Dendritic cell treated with granulocyte-macrophage colony-stimulating factor and Interleukin-4, amounts not matched to agents 40 ng/mL and 50 ng/mL, for 4 days (primary cell): ENCODE measurements at regions of chr1 and their contacts with region 1.

Region 1: DNA sequence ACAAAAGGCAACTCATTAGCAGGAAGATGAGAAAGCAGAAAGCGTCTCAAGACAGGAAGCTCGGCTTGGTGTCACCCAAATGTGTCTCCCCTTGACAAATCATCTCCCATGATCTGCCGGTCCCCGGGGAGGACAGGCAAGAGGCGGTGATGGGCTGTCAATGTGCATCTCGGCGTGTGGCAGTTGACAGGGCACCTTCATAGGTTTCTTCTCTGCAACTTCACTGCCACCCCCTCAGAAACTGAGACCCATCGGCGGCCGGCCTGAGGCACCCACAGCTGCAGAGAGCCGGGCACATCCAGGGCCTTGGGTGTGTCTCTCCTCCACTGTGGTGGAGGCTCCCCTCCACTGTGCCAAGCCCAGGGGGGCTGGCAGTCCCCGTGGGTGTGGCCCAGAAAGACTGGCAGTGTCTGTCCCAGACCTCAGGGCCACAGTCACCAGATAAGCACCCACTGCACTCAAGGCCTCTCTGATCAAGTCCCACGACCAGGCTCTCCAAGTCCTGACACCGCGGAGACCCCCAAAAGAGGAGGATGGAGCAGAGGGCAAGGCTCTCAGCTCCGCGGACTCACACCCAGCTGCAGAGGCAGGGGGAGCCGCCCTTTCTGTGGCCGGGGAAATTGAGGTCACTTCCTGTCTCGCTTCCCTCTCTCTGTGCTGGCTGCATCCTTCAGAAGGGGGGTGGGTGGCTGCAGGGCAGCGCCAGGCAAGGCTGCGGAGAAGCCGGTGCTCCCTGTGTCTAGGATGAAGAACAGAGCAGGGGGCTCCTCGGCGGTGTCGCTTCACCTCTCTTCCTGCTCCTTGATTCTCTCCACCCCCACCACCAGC is 39.6 kb upstream of the LBR start:
- H3K4me3 Mint-ChIP-seq: peak overlapping the region; percentile 79
- H3K27ac Mint-ChIP-seq: peak overlapping the region; percentile 98
- H3K4me1 Mint-ChIP-seq: peaks cover 52% of the 10 kb centered on the region
- H3K27me3 Mint-ChIP-seq: no peaks in the 10 kb centered on the region

Region 2: DNA sequence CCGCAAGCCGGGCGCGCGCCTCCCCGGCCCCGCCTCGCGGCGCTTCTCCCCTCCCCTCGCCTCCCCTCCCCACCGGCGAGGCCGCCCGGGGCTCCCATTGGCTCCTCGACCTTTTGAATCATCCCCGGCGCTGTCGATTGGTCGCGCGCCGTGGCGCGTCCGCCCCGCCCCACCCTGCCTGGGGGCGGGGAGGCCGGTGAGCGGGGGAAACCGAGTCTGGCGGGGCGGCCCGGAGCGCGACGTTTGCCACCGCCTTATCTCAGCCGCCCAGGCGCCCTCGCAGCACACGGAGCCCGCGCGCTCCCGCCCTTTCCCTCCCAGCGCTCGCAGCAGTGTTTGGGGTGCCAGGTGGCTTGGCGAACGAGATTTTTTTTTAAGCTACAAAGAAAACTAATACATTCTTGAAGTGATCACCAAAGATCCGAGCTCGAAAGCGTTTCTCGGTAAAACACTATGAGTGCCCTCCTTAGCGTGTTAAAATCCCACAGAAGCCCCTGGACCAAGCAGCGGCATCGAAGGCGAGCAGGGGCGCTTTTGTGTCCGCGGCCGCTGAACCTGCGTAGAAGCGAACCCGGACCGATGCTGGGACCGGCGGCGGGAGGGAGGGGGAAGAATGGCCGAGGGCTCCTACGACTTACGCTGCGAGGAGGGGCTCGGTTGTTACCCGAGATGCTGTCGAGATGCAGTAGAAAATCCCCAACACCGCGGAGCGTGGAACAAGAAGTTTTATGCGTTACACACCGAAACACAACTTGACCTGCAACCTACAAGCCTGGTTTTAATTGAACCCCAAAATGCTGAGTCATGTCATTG is 39.1 kb before region 1 on chr1:
- intact Hi-C with region 1: loop called (anchors 2 kb)
- H3K4me3 Mint-ChIP-seq: peak overlapping the region; percentile 84
- H3K27ac Mint-ChIP-seq: peak overlapping the region; percentile 78
- H3K4me1 Mint-ChIP-seq: peaks cover 34% of the 10 kb centered on the region
- H3K27me3 Mint-ChIP-seq: peaks cover under 1% of the 10 kb centered on the region

Region 3: DNA sequence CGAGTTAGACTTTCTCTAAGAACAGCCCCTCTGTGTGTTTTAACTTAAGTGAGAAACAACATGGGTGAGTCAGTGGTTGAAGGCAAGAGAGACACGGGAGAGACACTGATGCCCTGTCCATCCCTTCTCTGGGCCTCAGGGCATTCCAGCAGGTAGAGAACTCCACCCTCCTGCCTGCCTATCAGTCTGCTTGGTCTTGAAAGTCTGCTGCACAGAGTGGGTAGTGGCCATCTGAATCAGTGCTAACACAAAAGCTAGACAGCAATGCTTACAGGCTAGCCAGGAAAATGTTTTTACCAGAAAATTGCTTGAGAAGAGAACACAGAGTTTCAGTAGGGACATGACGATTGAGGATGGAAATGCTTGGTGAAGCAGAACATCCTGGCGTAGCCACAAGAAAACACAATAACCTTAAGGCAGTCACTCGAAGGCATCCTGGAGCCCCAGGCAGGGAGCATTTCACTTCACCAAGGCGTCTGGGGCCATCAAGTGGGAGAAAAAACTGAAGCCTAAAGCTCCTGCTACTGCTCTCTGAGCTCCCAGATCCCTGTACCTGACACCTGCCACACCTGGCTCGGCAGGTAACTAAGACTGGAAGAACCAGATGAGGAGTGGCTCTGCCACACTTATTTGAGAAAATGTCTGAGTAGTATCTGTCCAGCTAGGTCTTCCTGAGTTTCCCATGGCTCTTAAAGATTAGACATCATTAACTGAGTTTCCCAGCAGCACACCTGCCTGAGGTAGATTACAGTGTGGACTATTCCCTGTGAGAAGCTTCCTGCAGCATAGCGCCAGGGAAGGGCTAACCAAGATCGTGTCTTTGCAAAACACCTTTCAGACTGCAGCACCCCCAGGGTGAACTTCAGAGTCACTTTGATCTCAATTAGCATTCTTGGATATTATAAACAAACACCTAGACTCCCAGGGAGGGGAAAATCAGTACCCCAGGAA is 21.5 kb before region 1 on chr1:
- intact Hi-C with region 1: loop called (anchors 1 kb)
- H3K4me3 Mint-ChIP-seq: peak overlapping the region; percentile 58
- H3K27ac Mint-ChIP-seq: peak overlapping the region; percentile 78
- H3K4me1 Mint-ChIP-seq: peaks cover 88% of the 10 kb centered on the region
- H3K27me3 Mint-ChIP-seq: no peaks in the 10 kb centered on the region

Region 4: GRCh38 chr1:225794954-225795353 is 327.5 kb after region 1 on chr1:
- intact Hi-C with region 1: no loop called
- H3K4me3 Mint-ChIP-seq: no peak overlapping the region
- H3K27ac Mint-ChIP-seq: no peak overlapping the region
- H3K4me1 Mint-ChIP-seq: no peaks in the 10 kb centered on the region
- H3K27me3 Mint-ChIP-seq: no peaks in the 10 kb centered on the region

Region 5: DNA sequence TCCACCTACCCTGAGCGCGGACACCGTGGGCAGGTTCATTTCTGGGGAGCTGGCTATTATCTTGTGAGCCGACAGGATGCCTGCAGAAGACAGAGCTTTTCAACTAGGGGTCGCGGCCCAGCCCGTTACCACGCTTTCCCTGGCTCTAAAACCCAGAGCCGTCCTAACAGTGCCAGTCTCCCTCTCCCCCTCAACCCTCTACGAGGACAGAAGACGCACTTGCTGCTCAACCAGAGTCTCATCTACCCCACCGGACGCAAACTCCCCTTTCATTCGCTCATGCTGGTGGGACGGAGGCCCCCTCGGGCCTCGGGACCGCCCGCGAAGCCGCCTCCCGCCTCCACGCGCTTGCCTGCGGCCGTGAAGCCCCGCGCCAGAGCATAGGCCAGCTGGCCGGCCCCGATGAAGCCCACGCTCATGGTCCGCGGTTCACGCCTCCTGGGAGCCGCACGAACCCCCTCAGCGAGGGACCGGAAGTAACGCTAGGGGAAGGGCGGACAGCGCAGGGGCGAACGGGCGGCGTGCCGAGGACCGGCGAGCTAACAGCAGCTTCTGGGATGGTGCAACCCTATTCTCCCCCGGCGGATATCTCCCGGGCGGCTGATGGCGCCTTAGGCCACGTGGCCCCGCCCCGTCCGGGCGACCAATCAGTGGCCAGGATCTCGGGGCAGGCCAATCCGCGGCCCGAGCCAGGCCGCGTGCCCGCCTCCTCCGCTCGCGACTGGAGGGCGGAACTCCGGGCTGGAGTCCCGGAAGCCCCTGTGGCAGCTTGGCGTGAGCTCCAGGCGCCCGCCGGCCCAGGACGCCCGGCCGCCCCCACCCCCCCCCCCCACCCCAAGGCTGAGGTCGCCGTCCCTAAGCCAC is 456.5 kb after region 1 on chr1 and contains the start of gene PYCR2:
- intact Hi-C with region 1: loop called (anchors 5 kb)
- H3K4me3 Mint-ChIP-seq: peak within 1 kb of the TSS; percentile 85
- H3K27ac Mint-ChIP-seq: peak within 1 kb of the TSS; percentile 91
- H3K4me1 Mint-ChIP-seq: peaks cover 49% of the 10 kb centered on the region
- H3K27me3 Mint-ChIP-seq: no peaks in the 10 kb centered on the region